Mammary epithelial cell (primary cell): ENCODE measurements at regions of chr12 and their contacts with region 1.

Region 1: GRCh38 chr12:26226629-26227360 is 31.4 kb downstream of the SSPN start:
- DNase-seq: peak; percentile 75
- H3K4me3 ChIP-seq: peak overlapping the region; percentile 21 to 38 (median 36)
- H3K27ac ChIP-seq: peak overlapping the region; percentile 59
- H3K4me1 ChIP-seq: peaks cover 19% of the 10 kb centered on the region
- H3K27me3 ChIP-seq: no peaks in the 10 kb centered on the region
- CTCF ChIP-seq: no peak

Region 2: GRCh38 chr12:26068503-26068902 is 158.3 kb before region 1 on chr12:
- CTCF ChIA-PET with region 1: no interaction called
- dilution Hi-C with region 1: no loop called
- in situ Hi-C with region 1: no loop called
- intact Hi-C with region 1: no loop called
- DNase-seq: no peak
- H3K4me3 ChIP-seq: no peak overlapping the region
- H3K27ac ChIP-seq: no peak overlapping the region
- H3K4me1 ChIP-seq: no peaks in the 10 kb centered on the region
- H3K27me3 ChIP-seq: no peaks in the 10 kb centered on the region
- CTCF ChIP-seq: no peak

Region 3: GRCh38 chr12:26153421-26154154 is 73.2 kb before region 1 on chr12:
- CTCF ChIA-PET with region 1: no interaction called
- dilution Hi-C with region 1: no loop called
- in situ Hi-C with region 1: no loop called
- intact Hi-C with region 1: loop called (anchors 1 kb)
- DNase-seq: peak; percentile 89
- H3K4me3 ChIP-seq: no peak overlapping the region
- H3K27ac ChIP-seq: peak overlapping the region; percentile 29
- H3K4me1 ChIP-seq: peaks cover 32% of the 10 kb centered on the region
- H3K27me3 ChIP-seq: no peaks in the 10 kb centered on the region
- CTCF ChIP-seq: peak in 1 of 2 donors; percentile 26